Heart right ventricle (tissue), 16 donors: ENCODE measurements at regions of chr17 and their contacts with region 1.

Region 1: GRCh38 chr17:55576996-55577586 is 65.8 kb upstream of the SMIM36 start:
- DNase-seq: peak; percentile 30 to 33
- ATAC-seq: peak; percentile 68 to 89 (median 78)
- H3K4me3 ChIP-seq: peak overlapping the region in 8 of 10 donors; percentile 12 to 50 (median 42)
- H3K27ac ChIP-seq: peak overlapping the region; percentile 47 to 88 (median 78)
- H3K4me1 ChIP-seq: peaks cover 0 to 26% (median 15%) of the 10 kb centered on the region in 9 donors
- H3K27me3 ChIP-seq: no peaks in the 10 kb centered on the region
- CTCF ChIP-seq: no peak

Region 2: DNA sequence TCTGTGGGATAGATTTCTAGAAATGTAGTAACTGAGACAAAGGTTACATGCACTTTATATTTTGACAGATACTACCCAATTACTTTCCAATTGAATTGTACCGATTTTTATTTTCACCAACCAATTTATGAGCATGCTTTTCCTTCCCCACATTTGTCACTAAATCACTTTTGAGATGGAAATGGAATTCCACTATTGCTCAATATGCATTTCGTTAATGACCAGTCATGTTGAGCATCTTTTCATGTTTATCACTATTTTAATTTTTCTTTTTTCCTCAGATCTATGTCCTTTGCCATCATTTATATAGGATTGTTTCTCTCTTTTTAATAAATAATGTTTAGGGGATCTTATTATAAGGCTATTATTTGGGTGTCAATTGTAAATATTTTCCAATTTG is 37.0 kb after region 1 on chr17:
- intact Hi-C with region 1: loop called in 1 of 10 experiments (anchors 2 kb)
- DNase-seq: no peak
- ATAC-seq: no peak
- H3K4me3 ChIP-seq: no peak overlapping the region
- H3K27ac ChIP-seq: no peak overlapping the region
- H3K4me1 ChIP-seq: peaks cover 0 to 9% (median 0%) of the 10 kb centered on the region in 9 donors
- H3K27me3 ChIP-seq: peaks cover 0 to 22% (median 3%) of the 10 kb centered on the region in 7 donors
- CTCF ChIP-seq: no peak

Region 3: DNA sequence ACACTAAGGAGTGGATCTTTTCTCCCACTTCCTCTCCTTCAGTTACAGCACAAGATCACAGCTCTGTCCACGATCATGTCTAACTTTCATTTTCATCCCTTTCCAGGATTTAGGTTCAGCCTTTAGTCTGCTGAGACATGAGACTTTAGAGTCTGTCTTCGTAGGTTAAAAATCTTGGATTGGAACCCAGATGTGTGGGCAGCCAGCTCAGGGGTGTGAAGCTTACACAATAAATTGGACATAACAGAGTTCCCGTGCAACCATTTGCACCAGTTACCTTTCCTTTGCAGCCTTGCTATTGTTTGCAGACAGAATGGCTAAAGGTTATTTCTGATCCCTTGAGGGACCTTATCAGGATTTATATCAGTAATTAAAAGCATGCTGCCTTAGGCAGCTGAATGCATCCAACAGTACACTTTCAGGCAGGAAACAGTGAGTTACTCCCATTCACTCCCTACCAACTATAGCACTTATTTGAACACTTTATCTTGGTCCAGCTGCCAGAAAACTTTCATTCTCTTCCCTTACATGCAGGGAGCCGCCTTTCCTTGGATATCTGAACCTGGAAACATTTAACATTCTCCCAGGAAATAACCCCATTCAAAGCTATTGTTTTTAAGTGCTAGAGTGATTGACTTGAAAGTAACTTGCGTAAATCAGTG is 58.3 kb after region 1 on chr17:
- intact Hi-C with region 1: loop called in 1 of 10 experiments (anchors 10 kb)
- DNase-seq: peak in 1 of 2 donors; percentile 14
- ATAC-seq: peak; percentile 57 to 93 (median 81)
- H3K4me3 ChIP-seq: peak overlapping the region in 4 of 10 donors; percentile 13 to 15 (median 14)
- H3K27ac ChIP-seq: peak overlapping the region in 5 of 10 donors; percentile 3 to 67 (median 31)
- H3K4me1 ChIP-seq: peaks cover 3 to 24% (median 19%) of the 10 kb centered on the region in 9 donors
- H3K27me3 ChIP-seq: peaks cover 0 to 40% (median 0%) of the 10 kb centered on the region in 7 donors
- CTCF ChIP-seq: no peak